ENCODE measurements at regions of chr20 and their contacts with region 1.

Region 1: DNA sequence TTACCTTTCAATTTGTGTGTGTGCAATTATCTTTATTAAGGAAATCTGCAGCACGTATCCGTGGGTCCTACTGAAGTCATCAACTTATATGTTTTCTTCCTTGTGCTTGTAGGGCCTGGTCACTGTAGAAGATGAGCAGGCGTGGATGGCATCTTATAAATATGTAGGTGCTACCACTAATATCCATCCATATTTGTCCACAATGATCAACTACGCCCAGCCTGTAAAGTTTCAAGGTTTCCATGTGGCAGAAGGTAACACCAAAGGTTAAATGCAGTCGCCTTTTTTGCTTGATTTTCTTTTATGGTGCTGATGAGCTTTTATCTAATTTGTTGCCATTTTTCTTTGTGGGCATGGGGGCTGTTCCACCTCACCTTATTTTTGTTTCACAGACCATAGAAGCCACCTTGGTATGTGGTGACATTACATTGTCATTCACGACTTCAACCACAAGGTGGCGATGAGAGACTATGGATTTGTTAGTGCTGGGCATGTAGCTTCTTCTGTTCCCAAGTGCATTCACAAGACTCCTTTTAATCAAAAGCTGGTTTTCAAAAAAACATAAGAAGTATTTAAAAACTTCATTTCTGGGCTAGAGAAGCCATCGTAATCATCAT is 106.5 kb upstream of the LAMP5 start:
- DNase-seq: peak; percentile 59
- H3K4me3 ChIP-seq: no peak overlapping the region
- H3K27ac ChIP-seq: no peak overlapping the region
- H3K4me1 ChIP-seq: no peaks in the 10 kb centered on the region
- H3K27me3 ChIP-seq: no peaks in the 10 kb centered on the region
- CTCF ChIP-seq: peak; percentile 71 to 84 (median 78)
- EP300 ChIP-seq: no peak
- POLR2A ChIP-seq: no peak

Region 2: GRCh38 chr20:9609887-9610502 is 202.1 kb after region 1 on chr20:
- in situ Hi-C with region 1: loop called (anchors 5 to 10 kb)
- intact Hi-C with region 1: loop called (anchors 5 kb)
- DNase-seq: peak; percentile 71
- H3K4me3 ChIP-seq: no peak overlapping the region
- H3K27ac ChIP-seq: no peak overlapping the region
- H3K4me1 ChIP-seq: no peaks in the 10 kb centered on the region
- H3K27me3 ChIP-seq: no peaks in the 10 kb centered on the region
- CTCF ChIP-seq: peak; percentile 61 to 72 (median 66)
- EP300 ChIP-seq: no peak
- POLR2A ChIP-seq: no peak

Measured in transverse colon (tissue), 4 donors.